ENCODE measurements at regions of chr4 and their contacts with region 1.

Region 1: DNA sequence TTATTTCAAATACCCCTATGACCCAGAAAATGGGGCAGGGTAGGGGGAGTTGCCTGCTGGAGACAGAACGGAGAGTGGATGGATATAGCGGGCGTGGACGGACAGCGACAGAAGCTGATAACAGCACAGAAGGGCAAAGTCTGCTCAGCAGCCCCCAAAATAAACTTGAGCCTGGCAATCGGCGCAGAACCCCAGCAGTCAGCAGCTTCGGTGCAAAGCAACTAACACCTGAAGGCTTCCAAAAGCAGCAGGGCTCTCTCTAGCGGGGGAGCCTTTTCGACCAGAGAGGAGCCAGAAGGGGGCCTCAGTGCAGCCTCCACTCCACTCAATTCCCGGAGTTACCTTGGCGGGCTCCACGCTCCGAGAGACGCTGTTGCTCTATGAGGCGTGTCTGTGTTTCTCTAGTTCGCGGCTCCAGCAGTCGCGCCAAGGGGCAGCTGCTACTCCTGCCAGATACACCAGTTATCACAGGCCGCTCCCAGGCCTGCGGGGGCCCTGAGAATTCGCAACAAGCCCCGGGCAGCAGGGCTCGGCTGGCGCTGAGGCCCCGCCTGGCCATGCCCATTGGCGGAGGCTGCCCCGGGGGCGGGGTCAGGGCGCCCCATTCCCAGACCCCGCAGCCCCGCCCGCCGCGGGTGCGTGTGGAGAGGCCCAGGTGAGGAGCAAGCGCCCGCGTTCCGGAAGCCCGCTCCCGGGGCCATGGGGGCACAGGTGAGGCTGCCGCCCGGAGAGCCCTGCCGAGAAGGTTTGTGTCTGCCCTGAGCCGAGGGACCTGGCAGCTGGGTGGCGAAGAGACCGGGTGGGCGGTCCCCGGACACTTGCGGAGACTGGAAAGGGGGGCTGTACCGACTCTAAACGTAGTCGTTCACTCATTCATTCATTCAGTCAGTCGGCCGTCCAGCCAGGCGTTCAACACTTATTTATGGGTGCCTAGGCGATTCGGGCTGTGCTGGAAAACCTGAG is at the starts of genes CNGA1 and NIPAL1:
- DNase-seq: peak; percentile 70 to 93
- H3K4me3 ChIP-seq: peak within 1 kb of the TSS; percentile 23
- CTCF ChIP-seq: no peak
- POLR2A ChIP-seq: no peak
- total RNA-seq, gene CNGA1: 3.6 to 12.8 (median 8.7) TPM
- total RNA-seq, gene NIPAL1: 40.2 to 65.8 (median 60.0) TPM

Region 2: DNA sequence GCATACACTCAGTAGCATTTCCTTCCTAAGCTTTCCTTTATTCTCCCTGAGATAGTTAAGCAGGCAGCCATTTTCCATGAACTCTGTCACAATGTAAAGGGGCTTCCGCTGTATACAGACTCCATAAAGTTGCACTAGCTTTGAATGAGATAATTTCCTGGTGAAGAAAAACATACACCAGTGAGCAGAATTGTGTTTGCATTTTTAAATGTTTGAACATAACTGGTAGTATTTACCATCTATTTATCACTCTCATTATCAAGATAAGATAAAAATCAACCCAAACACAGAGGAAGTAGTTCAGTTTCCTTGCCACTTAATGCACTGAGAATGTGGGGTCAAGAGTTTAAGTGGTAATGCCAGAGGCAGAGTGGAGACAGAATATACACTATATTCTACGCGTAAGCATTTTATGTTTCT is 63.6 kb after region 1 on chr4:
- intact Hi-C with region 1: loop called (anchors 10 kb)
- DNase-seq: no peak
- H3K4me3 ChIP-seq: no peak overlapping the region
- CTCF ChIP-seq: no peak
- POLR2A ChIP-seq: no peak